ENCODE measurements at regions of chr2 and their contacts with region 1.

Region 1: DNA sequence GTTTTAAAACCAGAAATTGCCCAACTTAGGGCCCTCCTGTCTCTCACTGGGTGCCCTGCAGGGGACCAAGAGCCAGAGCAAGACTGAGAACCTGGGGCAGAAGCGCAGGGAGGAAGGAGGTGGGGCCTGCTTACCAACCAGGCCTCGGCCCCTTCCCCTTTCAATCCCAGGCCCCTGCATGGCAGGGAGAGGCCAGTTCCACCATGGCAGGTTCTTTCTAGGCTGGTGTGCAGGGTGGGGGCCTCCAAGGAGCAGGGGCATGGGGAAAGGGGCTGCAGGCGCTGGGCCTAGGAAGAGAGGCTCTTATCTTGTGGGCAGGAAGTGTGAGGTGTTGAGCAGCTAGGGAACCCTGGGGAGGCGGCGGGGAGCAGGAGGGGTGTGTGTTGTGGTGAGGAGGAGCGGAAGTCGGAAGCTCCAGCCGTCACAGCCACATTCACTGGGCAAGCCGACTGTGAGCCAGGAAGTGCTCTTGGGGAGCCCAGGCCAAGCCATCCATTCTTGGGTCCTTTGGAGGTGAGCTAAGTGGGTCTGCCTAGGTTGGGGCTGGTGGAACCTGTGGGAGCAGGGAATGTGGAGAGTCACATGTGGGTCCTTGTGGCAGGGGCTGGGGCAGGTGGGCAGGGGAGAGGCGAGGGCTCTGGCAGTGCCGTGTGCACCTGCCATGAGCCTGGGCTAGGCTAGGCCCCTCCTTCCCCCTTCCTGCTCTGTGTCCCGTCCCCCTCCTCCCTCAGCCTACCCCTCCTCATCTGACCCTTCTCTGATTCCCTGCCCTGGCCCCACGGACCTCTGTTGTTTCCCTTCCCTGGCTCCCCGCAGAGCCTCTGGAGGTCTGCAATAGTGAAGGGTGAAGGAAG is at the start of gene PSD4:
- DNase-seq: peak; percentile 83
- ATAC-seq: peak; percentile 73
- H3K4me3 ChIP-seq: peak within 1 kb of the TSS; percentile 58 to 95 (median 77)
- H3K4me3 Mint-ChIP-seq: peak within 1 kb of the TSS; percentile 91
- H3K27ac ChIP-seq: peak within 1 kb of the TSS; percentile 87 to 91
- H3K27ac Mint-ChIP-seq: peak within 1 kb of the TSS; percentile 92
- H3K4me1 ChIP-seq: peaks cover 69 to 90% of the 10 kb centered on the region in 2 donors
- H3K4me1 Mint-ChIP-seq: peaks cover 86% of the 10 kb centered on the region
- H3K27me3 ChIP-seq: no peaks in the 10 kb centered on the region
- H3K27me3 Mint-ChIP-seq: no peaks in the 10 kb centered on the region
- CTCF ChIP-seq: no peak
- total RNA-seq, gene PSD4: 203 and 217 TPM in 2 replicates

Region 2: GRCh38 chr2:112726497-112727190 is 447.1 kb before region 1 on chr2:
- CTCF ChIA-PET with region 1: no interaction called
- POLR2A ChIA-PET with region 1: no interaction called
- intact Hi-C with region 1: no loop called
- DNase-seq: peak; percentile 94
- ATAC-seq: peak; percentile 91
- H3K4me3 ChIP-seq: no peak overlapping the region
- H3K4me3 Mint-ChIP-seq: peak overlapping the region; percentile 80
- H3K27ac ChIP-seq: no peak overlapping the region
- H3K27ac Mint-ChIP-seq: peak overlapping the region; percentile 88
- H3K4me1 ChIP-seq: peaks cover 8 to 25% of the 10 kb centered on the region in 2 donors
- H3K4me1 Mint-ChIP-seq: peaks cover 17% of the 10 kb centered on the region
- H3K27me3 ChIP-seq: no peaks in the 10 kb centered on the region
- H3K27me3 Mint-ChIP-seq: no peaks in the 10 kb centered on the region
- CTCF ChIP-seq: peak; percentile 94

Region 3: DNA sequence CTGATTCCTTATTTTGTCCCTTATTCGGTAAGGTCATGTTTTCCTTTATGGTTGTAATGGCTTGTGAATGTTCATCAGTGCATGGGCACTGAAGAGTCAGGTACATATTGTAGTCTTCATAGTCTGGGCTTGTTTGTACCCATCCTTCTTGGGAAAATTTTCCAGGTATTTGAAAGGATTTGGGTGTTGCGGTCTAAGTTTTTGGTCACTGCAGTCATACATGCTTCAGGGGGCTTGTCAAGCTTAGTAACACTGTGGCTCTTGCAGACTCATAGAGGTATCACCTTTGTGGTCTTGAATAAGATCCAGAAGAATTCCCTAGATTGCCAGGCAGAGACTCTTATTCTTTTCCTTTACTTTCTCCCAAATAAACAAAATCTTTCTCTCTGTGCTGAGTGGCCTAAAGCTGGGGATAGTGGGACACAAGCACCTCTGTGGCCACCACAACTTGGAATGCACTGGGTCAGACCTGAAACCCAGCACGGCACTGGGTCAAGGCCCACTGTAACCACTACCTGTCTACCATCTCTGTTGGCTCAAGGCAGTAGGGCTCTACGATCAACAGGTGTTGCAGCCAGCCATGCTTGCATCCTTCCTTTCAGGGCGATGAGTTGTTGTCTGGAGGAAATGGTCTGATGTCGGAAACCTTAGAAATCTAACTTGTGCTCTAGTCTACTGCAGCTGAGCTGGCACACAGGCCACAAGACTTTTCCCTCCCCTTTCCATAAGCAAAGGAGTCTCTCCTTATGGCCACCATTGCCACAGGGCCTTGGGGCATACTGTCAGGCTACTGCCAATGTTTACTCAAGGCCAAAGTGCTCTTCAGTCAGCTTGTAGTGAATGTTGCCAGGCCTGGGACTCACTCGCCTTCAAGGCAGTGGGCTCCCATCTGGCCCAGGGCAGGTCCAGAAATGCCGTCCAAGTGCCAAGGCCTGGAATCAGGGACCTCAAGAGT is 24.9 kb before region 1 on chr2:
- CTCF ChIA-PET with region 1: interaction called, 16 read pairs
- POLR2A ChIA-PET with region 1: interaction called, 14 read pairs
- intact Hi-C with region 1: no loop called
- DNase-seq: peak; percentile 62
- ATAC-seq: peak; percentile 70
- H3K4me3 ChIP-seq: no peak overlapping the region
- H3K4me3 Mint-ChIP-seq: peak overlapping the region; percentile 48
- H3K27ac ChIP-seq: peak overlapping the region; percentile 52 to 89
- H3K27ac Mint-ChIP-seq: peak overlapping the region; percentile 91
- H3K4me1 ChIP-seq: peaks cover 20 to 24% of the 10 kb centered on the region in 2 donors
- H3K4me1 Mint-ChIP-seq: peaks cover 26% of the 10 kb centered on the region
- H3K27me3 ChIP-seq: no peaks in the 10 kb centered on the region
- H3K27me3 Mint-ChIP-seq: no peaks in the 10 kb centered on the region
- CTCF ChIP-seq: no peak

Region 4: GRCh38 chr2:113157118-113157896 is 16.5 kb before region 1 on chr2:
- CTCF ChIA-PET with region 1: interaction called, 29 read pairs
- POLR2A ChIA-PET with region 1: interaction called, 8 read pairs
- intact Hi-C with region 1: loop called (anchors 2 kb)
- DNase-seq: peak; percentile 49
- ATAC-seq: peak; percentile 88
- H3K4me3 ChIP-seq: peak overlapping the region; percentile 21 to 71 (median 62)
- H3K4me3 Mint-ChIP-seq: peak overlapping the region; percentile 89
- H3K27ac ChIP-seq: peak overlapping the region; percentile 11 to 59
- H3K27ac Mint-ChIP-seq: peak overlapping the region; percentile 56
- H3K4me1 ChIP-seq: peaks cover 17 to 23% of the 10 kb centered on the region in 2 donors
- H3K4me1 Mint-ChIP-seq: peaks cover 16% of the 10 kb centered on the region
- H3K27me3 ChIP-seq: peaks cover 0 to 2% (median 0%) of the 10 kb centered on the region in 4 experiments
- H3K27me3 Mint-ChIP-seq: no peaks in the 10 kb centered on the region
- CTCF ChIP-seq: no peak